Activated T-helper 1 cell treated with anti-CD3 and anti-CD28 coated beads, Interleukin-12 subunit alpha, Interleukin-12 subunit beta, Interleukin-2, Interleukin-4 antibody, amounts not matched to agents 30 ng/mL and 10 ng/mL and 1 ng/mL, durations not matched to agents 14 hours and 24 hours and 36 hours (primary cell): ENCODE measurements at regions of chr3 and their contacts with region 1.

Region 1: GRCh38 chr3:87997298-87997697 is 61.5 kb downstream of the CGGBP1 start:
- DNase-seq: peak; percentile 31
- H3K4me3 Mint-ChIP-seq: peak overlapping the region; percentile 34
- H3K27ac Mint-ChIP-seq: peak overlapping the region; percentile 56
- H3K4me1 Mint-ChIP-seq: peaks cover 30% of the 10 kb centered on the region
- H3K27me3 Mint-ChIP-seq: peaks cover 13% of the 10 kb centered on the region

Region 2: GRCh38 chr3:88019024-88019423 is 21.7 kb after region 1 on chr3:
- intact Hi-C with region 1: loop called (anchors 1 kb)
- DNase-seq: peak; percentile 21
- H3K4me3 Mint-ChIP-seq: no peak overlapping the region
- H3K27ac Mint-ChIP-seq: no peak overlapping the region
- H3K4me1 Mint-ChIP-seq: peaks cover 27% of the 10 kb centered on the region
- H3K27me3 Mint-ChIP-seq: peaks cover 17% of the 10 kb centered on the region